ENCODE measurements at regions of chr5 and their contacts with region 1.

Region 1: DNA sequence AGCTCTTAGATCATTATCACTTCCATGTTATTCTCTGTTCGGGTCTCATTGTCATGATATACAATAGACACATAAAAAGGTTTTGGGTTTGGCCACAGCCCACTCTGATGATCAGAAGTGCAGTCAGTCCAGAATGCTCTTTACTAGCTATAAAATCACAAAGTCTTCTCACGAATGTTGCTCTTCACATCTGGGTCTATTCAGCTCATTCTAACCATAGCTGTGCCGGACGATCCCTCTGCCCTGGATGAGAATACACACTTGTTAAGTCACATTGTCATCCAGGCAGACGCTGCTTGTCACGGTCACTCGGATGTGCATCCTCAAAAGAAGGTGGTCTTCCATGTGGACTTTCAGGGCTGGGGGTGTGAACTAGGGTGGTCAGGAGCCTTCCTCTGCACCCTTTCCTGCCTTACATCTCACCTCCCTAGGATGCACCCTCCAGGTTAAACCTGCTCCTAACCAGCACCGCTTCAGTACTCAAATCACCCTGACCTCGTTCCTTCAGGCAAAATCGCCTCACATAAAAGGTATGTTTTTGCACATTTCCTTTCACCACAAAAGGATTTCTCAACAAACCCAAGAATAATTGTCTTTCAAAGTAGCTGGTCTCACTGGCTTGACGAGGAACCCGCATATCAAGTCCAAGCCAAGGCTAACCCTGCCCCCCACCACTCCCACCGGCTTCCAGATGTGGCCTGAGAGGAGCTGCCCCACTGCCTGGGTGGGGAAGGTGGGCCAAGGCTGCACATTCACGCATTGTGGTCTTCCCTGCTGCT is 21.9 kb downstream of the ANKH start:
- DNase-seq: no peak

Region 2: GRCh38 chr5:15463231-15463980 is 613.7 kb after region 1 on chr5:
- intact Hi-C with region 1: loop called in 1 of 2 experiments (anchors 5 kb)
- DNase-seq: no peak

Measured in posterior vena cava (tissue), 2 donors.